ENCODE measurements at regions of chr3 and their contacts with region 1.

Region 1: GRCh38 chr3:49339945-49340800 is at the start of gene USP4:
- DNase-seq: peak; percentile 95
- H3K4me3 ChIP-seq: peak within 1 kb of the TSS; percentile 62 to 90 (median 86)
- H3K27ac ChIP-seq: peak within 1 kb of the TSS; percentile 91 to 99 (median 94)
- H3K4me1 ChIP-seq: peaks cover 5 to 45% (median 25%) of the 10 kb centered on the region in 4 donors
- H3K27me3 ChIP-seq: no peaks in the 10 kb centered on the region
- CTCF ChIP-seq: peak; percentile 14 to 49 (median 29)
- EP300 ChIP-seq: peak; percentile 23
- POLR2A ChIP-seq: peak; percentile 84
- total RNA-seq, gene USP4: 11.1 to 39.6 (median 27.0) TPM

Region 2: DNA sequence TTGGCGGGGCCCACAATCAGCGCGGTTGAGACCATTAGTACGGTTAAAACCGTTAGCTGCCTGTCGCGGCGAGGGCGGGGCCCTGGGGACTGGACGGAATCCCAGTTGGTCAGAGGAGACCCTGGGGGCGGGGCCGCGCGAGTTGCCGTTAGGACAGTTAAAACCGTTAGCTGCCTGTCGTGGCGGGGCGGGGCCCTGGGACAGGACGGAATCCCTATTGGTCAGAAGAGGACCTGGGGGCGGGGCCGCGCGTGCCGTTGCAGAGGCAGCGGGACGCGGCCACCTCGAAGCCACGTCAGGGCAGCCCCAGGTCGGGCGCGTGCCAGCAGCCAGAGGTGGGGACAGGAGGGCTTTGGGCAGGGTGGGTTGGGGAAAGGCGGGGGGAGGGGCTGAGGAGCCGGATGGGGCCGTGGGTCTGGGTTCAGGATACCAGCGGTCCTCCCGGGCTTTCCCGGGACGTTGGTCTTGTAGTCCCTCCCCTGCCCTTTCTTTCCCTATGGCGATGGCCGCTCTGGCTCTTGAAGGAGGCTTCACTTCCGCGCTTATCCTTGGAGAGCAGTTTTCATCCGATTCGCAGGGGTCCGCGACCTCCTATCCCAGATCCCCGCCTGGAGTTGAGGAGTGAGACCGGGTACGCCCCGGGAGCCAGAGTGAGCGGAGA is 140.8 kb before region 1 on chr3:
- in situ Hi-C with region 1: no loop called
- intact Hi-C with region 1: no loop called
- DNase-seq: peak; percentile 74
- H3K4me3 ChIP-seq: peak overlapping the region in 3 of 4 donors; percentile 10 to 37 (median 22)
- H3K27ac ChIP-seq: peak overlapping the region in 3 of 4 donors; percentile 48 to 74 (median 67)
- H3K4me1 ChIP-seq: no peaks in the 10 kb centered on the region
- H3K27me3 ChIP-seq: no peaks in the 10 kb centered on the region
- CTCF ChIP-seq: no peak
- EP300 ChIP-seq: no peak
- POLR2A ChIP-seq: no peak

Region 3: GRCh38 chr3:49411968-49412631 is 71.9 kb after region 1 on chr3 and contains the starts of genes RHOA and TCTA:
- in situ Hi-C with region 1: no loop called
- intact Hi-C with region 1: loop called (anchors 2 kb)
- DNase-seq: peak; percentile 99
- H3K4me3 ChIP-seq: peak within 1 kb of the TSS; percentile 75 to 92 (median 83)
- H3K27ac ChIP-seq: peak within 1 kb of the TSS; percentile 98 to 99 (median 98)
- H3K4me1 ChIP-seq: peaks cover 26 to 69% (median 37%) of the 10 kb centered on the region in 4 donors
- H3K27me3 ChIP-seq: no peaks in the 10 kb centered on the region
- CTCF ChIP-seq: no peak
- EP300 ChIP-seq: peak; percentile 1
- POLR2A ChIP-seq: peak; percentile 98
- total RNA-seq, gene RHOA: 302 to 526 (median 401) TPM
- total RNA-seq, gene TCTA: 7.8 to 59.8 (median 38.6) TPM

Region 4: DNA sequence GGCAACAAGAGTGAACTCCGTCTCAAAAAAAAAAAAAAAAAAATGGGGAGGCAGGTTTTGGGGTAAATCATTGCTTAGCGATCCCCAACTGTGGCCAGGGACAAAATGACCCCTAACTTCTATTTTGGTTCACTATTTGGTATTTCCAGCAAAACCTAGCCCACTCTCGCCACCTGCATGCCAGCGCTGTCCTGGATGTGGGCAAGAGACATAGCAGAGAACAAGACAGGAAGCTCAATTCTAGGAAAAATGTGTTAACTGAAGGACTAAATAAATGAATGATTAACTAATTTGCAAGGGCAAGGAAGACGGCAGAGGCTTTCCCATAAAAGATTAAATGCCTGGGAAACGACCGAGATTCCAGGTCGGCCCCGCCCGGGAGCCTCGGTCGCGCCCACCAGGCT is 88.5 kb after region 1 on chr3:
- in situ Hi-C with region 1: loop called in 2 of 4 experiments (anchors 25 kb)
- intact Hi-C with region 1: no loop called
- DNase-seq: no peak
- H3K4me3 ChIP-seq: peak overlapping the region; percentile 50 to 94 (median 60)
- H3K27ac ChIP-seq: peak overlapping the region; percentile 90 to 97 (median 93)
- H3K4me1 ChIP-seq: peaks cover 0 to 14% (median 8%) of the 10 kb centered on the region in 4 donors
- H3K27me3 ChIP-seq: no peaks in the 10 kb centered on the region
- CTCF ChIP-seq: no peak
- EP300 ChIP-seq: no peak
- POLR2A ChIP-seq: no peak

Region 5: DNA sequence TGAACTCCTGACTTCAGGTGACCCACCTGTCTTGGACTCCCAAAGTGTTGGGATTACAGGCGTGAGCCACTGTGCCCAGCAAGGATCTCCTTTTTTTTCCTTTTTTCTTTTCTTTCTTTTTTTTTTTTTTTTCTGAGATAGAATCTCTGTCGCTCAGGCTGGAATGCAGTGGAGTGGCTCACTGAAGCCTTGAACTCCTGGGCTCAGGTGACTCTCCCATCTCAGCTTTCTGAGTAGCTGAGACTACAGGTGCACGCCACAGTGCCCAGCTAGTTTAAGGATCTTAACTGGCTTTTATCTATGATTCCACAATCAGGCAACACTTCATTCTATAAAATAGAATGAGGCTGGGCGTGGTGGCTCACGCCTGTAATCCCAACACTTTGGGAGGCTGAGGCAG is 105.2 kb after region 1 on chr3:
- in situ Hi-C with region 1: loop called (anchors 10 to 25 kb)
- intact Hi-C with region 1: loop called (anchors 10 kb)
- DNase-seq: no peak
- H3K4me3 ChIP-seq: no peak overlapping the region
- H3K27ac ChIP-seq: no peak overlapping the region
- H3K4me1 ChIP-seq: peaks cover 0 to 17% (median 2%) of the 10 kb centered on the region in 4 donors
- H3K27me3 ChIP-seq: no peaks in the 10 kb centered on the region
- CTCF ChIP-seq: no peak
- EP300 ChIP-seq: no peak
- POLR2A ChIP-seq: no peak

Measured in transverse colon (tissue), 4 donors.